OCI-LY7 (cell line): ENCODE measurements at regions of chr1 and their contacts with region 1.

Region 1: DNA sequence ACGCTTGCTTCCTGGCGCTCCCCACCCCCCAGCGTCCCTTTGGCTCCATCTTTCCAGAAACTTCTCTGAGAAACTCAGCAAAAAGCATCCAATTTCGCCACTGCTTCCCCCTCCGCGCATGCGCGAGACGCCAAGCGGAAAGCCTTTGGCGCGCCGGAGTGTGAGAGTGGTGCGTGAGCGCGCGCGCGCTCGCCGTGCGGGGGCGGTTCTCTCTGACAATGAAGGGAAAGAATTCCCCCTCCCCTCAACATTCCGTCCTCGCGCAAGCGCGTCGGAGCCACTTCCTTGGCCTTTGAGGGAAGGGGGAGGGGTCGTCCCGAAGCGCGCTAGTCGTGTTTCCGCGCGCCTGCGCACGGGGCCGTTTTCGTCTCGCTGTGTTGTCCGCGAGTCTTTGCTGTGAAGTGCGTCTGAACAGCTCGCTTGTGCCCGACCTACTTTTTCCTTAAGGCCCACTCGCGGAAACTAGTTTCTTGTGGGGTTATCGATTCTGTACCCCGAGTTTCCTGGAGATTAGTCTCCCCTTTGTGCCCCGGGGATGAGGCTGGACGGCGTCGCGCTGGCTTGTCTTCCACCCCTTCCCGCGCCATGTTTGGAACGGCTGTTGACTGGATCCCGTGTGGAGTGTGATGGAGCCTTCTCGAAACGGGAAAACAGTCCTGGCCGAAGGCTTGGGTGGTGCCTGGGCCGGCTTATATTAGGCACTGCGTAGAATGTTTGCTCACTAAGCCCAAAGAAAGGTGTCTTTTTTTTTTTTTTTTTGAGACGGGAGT is 11.6 kb upstream of the SPEN start:
- DNase-seq: peak; percentile 99
- H3K4me3 ChIP-seq: peak overlapping the region; percentile 75
- H3K27ac ChIP-seq: peak overlapping the region; percentile 97
- H3K4me1 ChIP-seq: peaks cover 54% of the 10 kb centered on the region
- CTCF ChIP-seq: no peak

Region 2: GRCh38 chr1:15090373-15090772 is 745.6 kb before region 1 on chr1:
- CTCF ChIA-PET with region 1: no interaction called
- POLR2A ChIA-PET with region 1: no interaction called
- intact Hi-C with region 1: no loop called
- DNase-seq: peak; percentile 71
- H3K4me3 ChIP-seq: no peak overlapping the region
- H3K27ac ChIP-seq: no peak overlapping the region
- H3K4me1 ChIP-seq: peaks cover 22% of the 10 kb centered on the region
- CTCF ChIP-seq: no peak

Region 3: DNA sequence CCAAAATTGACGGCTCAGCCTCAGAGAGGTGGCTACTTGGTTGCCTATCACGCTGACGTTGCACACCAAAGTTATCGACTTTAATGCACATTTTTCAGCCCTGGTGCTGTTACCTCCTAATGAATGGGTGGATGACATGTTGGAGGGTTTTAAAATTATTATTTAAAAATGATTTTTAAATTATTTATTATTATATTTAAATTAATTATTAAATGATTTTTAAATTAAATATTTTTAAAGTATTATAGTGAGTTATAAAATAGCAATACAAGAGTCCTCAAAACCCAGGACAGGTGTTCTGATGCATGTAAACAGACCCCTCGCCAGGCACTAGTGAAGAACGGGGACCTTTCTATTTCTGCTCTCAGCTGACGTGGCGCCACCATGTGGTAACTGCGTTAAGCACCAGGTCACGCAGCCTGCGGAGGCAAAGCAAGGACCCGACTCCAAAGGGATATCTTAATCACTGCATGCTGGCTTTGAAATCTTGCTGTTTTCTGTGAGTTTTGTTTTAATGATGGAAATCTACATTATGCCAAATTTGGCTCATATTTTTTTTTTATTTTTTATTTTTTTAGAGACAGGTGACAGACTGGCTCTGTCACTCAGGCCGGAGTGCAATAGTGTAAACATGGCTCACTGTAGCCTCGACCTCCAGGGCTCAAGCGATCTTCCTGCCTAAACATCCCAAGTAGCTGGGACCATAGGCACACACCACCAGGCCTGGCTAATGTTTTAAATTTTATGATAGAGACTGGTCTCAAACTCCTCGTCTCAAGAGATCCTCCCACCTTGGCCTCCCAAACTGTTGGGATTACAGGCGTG is 334.5 kb before region 1 on chr1:
- CTCF ChIA-PET with region 1: no interaction called
- POLR2A ChIA-PET with region 1: no interaction called
- intact Hi-C with region 1: no loop called
- DNase-seq: peak; percentile 69
- H3K4me3 ChIP-seq: no peak overlapping the region
- H3K27ac ChIP-seq: no peak overlapping the region
- H3K4me1 ChIP-seq: no peaks in the 10 kb centered on the region
- CTCF ChIP-seq: peak; percentile 94

Region 4: DNA sequence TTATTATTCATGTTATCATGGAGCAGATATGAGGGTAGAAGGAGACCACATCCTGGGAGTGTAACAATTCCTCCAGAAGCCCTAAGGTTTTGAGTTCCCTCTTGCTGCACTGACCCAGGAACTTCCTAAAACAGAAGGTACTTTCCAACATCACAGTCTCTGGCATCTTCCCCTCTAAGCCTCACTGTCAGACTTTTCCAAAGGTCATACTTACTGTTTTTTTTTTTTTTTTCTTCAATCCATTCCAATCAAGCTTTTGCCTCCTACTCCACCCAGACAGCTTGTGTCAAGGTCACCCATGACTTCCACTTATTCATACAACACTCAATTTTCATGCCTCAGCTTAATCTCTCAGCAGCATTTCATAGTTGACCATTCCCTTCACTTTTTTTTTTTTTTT is 10.1 kb before region 1 on chr1:
- CTCF ChIA-PET with region 1: interaction called, 3 read pairs
- POLR2A ChIA-PET with region 1: interaction called, 12 read pairs
- intact Hi-C with region 1: no loop called
- DNase-seq: no peak
- H3K4me3 ChIP-seq: no peak overlapping the region
- H3K27ac ChIP-seq: no peak overlapping the region
- H3K4me1 ChIP-seq: peaks cover 46% of the 10 kb centered on the region
- CTCF ChIP-seq: no peak

Region 5: GRCh38 chr1:15847100-15847892 is 11.4 kb after region 1 on chr1 and contains the start of gene SPEN:
- CTCF ChIA-PET with region 1: no interaction called
- POLR2A ChIA-PET with region 1: interaction called, 68 read pairs
- intact Hi-C with region 1: loop called (anchors 1 kb)
- DNase-seq: peak; percentile 98
- H3K4me3 ChIP-seq: peak within 1 kb of the TSS; percentile 87
- H3K27ac ChIP-seq: peak within 1 kb of the TSS; percentile 98
- H3K4me1 ChIP-seq: peaks cover 65% of the 10 kb centered on the region
- CTCF ChIP-seq: no peak
- total RNA-seq, gene SPEN: 40.7 and 41.4 TPM in 2 replicates